ENCODE measurements at regions of chr7 and their contacts with region 1.

Region 1: DNA sequence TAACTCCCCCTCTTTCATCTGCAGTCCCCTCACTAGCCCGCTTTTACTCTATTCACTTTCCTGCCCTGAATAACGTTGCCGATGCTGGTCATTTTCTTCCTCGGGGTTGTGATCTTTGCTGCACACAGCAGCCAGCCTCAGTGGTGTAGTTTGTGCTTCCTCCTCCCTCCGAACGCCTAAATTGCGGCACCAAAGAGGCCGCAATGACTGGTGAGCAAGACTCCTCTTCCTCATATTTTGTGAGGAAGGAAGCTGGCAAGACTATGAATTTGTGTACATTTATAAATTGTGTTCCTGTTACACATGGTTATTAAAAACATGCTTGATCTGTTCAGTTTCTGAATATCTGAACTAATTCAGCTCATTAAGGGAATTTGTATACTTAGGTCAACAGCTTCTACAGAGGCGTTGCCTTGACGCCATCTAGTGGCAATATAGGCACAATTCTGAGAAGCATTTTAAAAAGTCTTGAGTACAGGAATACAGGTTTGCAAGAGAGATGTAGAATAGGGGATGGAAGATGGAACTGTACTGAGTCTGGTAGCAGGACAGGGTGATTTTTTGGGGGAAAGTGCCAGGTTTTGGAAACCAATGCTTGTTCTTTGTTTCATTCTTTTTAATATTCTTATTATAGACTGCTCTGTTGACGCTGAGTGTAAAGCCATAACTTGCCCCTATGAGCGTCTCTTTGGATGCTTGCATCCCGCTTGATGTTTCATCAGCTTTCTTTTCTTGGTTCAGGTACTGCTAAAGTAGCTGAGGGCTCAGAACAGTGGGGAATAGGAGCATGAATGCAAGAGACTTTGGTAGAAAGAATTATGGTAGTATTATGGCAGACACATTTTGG is 4.1 kb upstream of the TAS2R5 start:
- DNase-seq: peak; percentile 27
- H3K4me3 Mint-ChIP-seq: no peak overlapping the region
- H3K27ac Mint-ChIP-seq: no peak overlapping the region
- H3K4me1 Mint-ChIP-seq: no peaks in the 10 kb centered on the region
- H3K27me3 Mint-ChIP-seq: no peaks in the 10 kb centered on the region

Region 2: DNA sequence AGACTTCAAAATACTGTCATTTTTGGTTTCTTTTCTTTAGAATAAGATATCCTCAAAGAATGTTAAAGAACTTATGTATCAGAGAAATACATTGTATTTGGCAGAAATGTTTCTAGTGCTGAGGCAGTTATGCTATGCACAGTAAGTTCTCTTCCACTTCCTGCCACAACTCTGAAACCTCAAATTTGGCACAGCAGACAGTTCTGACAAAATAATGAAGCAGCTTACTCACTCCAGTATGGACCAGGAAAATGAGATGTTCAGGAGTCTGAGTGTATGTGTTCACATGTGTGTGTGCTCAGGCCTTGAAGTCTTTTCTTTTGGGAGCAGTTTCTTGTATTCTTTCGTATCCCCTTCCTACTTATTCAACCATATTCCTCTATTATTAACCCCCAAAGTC is 431.7 kb before region 1 on chr7:
- CTCF ChIA-PET with region 1: no interaction called
- POLR2A ChIA-PET with region 1: no interaction called
- intact Hi-C with region 1: no loop called
- DNase-seq: no peak
- H3K4me3 Mint-ChIP-seq: no peak overlapping the region
- H3K27ac Mint-ChIP-seq: no peak overlapping the region
- H3K4me1 Mint-ChIP-seq: peaks cover 5% of the 10 kb centered on the region
- H3K27me3 Mint-ChIP-seq: peaks cover 3% of the 10 kb centered on the region

Region 3: DNA sequence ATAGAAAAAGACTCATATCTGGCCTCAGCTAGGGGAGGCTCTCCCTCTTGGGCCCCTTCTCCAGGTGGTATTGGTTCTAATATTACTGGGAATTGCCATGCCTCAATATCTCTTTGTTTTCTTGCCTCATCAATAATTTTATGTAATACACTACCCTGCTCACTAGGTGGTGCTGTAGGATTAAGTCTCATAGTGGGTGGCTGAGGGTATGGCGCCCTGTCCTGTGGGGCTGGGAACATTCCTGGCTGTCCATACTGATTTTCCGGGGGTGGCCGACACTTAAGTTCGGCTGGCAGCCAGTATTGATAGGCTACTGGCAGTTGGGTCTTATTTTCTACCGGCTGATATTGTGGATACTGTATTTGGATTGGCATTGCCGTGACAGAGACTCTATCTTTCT is 31.0 kb before region 1 on chr7:
- CTCF ChIA-PET with region 1: interaction called, 13 read pairs
- POLR2A ChIA-PET with region 1: no interaction called
- intact Hi-C with region 1: no loop called
- DNase-seq: no peak
- H3K4me3 Mint-ChIP-seq: no peak overlapping the region
- H3K27ac Mint-ChIP-seq: no peak overlapping the region
- H3K4me1 Mint-ChIP-seq: no peaks in the 10 kb centered on the region
- H3K27me3 Mint-ChIP-seq: no peaks in the 10 kb centered on the region